Colonic mucosa (tissue), 4 donors: ENCODE measurements at regions of chr3 and their contacts with region 1.

Region 1: GRCh38 chr3:102229062-102229655 is 205.7 kb upstream of the ZPLD1 start:
- DNase-seq: peak; percentile 77
- H3K4me3 ChIP-seq: no peak overlapping the region
- H3K27ac ChIP-seq: no peak overlapping the region
- H3K4me1 ChIP-seq: no peaks in the 10 kb centered on the region
- H3K27me3 ChIP-seq: no peaks in the 10 kb centered on the region
- CTCF ChIP-seq: peak; percentile 92

Region 2: DNA sequence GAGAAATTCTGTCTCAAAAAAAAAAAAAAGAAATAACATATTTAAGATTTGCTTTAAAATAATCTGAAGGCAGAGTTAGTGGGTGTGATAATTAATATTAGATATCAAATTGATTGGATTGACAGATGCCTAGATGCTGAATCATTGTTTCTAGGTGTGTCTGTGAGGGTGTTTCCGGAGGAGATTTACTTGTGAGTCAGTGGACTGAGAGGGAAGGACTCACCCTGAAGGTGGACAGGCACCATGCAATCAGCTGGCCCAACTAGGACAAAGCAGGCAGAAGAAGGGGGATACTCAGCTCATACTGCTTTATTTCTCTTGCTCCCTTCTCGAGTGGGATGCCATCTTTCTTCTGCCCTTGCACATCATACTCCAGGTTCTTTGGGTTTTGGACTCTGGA is 526.0 kb before region 1 on chr3:
- intact Hi-C with region 1: loop called (anchors 10 kb)
- DNase-seq: no peak
- H3K4me3 ChIP-seq: no peak overlapping the region
- H3K27ac ChIP-seq: no peak overlapping the region
- H3K4me1 ChIP-seq: no peaks in the 10 kb centered on the region
- H3K27me3 ChIP-seq: no peaks in the 10 kb centered on the region
- CTCF ChIP-seq: no peak

Region 3: DNA sequence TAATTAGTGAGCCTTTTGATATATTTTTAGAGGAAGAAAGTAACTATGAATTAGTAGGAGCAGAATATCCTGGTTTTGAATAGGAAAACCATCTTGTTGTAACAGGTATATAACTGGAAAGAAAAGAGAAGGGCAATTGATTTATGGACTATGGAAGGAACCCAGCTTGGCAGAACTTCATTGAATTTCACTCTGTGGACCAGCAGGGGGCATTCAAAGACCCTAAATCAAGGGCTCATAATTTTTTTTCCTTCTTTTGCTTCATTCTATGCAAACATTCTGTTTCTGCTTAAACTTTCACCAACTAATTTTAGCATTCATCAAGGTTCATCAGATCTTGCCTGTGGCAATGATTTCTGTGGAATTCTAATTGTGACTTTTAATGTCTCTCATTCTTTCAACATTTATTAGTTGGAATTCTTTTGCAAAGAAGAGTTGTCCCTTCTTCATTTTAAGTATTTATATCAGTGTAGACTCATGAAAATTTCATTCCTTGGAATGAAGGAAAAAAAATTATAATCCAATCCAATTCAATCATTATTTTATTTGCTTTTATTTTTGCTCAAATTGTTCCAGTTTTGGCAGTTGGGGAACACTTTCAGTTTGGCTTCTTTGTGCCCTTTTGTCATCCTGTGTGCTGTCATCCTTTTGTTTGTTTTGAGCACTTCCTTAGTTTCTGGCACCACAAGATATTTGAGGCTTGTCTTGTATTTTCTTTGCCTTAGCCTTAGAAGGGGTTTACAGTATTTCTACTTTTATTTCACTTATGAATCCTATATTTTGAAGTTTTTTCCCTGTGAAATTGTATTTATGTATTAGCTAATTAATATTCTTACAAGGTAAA is 419.8 kb before region 1 on chr3:
- intact Hi-C with region 1: loop called (anchors 2 kb)
- DNase-seq: peak; percentile 38
- H3K4me3 ChIP-seq: no peak overlapping the region
- H3K27ac ChIP-seq: no peak overlapping the region
- H3K4me1 ChIP-seq: peaks cover 4% of the 10 kb centered on the region
- H3K27me3 ChIP-seq: no peaks in the 10 kb centered on the region
- CTCF ChIP-seq: peak; percentile 69

Region 4: GRCh38 chr3:101873619-101874018 is 355.5 kb before region 1 on chr3:
- intact Hi-C with region 1: loop called (anchors 10 kb)
- DNase-seq: no peak
- H3K4me3 ChIP-seq: no peak overlapping the region
- H3K27ac ChIP-seq: no peak overlapping the region
- H3K4me1 ChIP-seq: no peaks in the 10 kb centered on the region
- H3K27me3 ChIP-seq: no peaks in the 10 kb centered on the region
- CTCF ChIP-seq: no peak

Region 5: GRCh38 chr3:102536456-102536855 is 307.3 kb after region 1 on chr3:
- intact Hi-C with region 1: loop called (anchors 2 kb)
- DNase-seq: no peak
- H3K4me3 ChIP-seq: no peak overlapping the region
- H3K27ac ChIP-seq: no peak overlapping the region
- H3K4me1 ChIP-seq: no peaks in the 10 kb centered on the region
- H3K27me3 ChIP-seq: no peaks in the 10 kb centered on the region
- CTCF ChIP-seq: peak; percentile 26